Activated CD4-positive, alpha-beta memory T cell treated with anti-CD3 and anti-CD28 coated beads for 36 hours (primary cell): ENCODE measurements at regions of chr17 and their contacts with region 1.

Region 1: GRCh38 chr17:32461853-32462617 is 17.7 kb downstream of the PSMD11 start:
- DNase-seq: peak; percentile 72
- H3K4me3 Mint-ChIP-seq: no peak overlapping the region
- H3K27ac Mint-ChIP-seq: peak overlapping the region; percentile 72
- H3K4me1 Mint-ChIP-seq: peaks cover 32% of the 10 kb centered on the region
- H3K27me3 Mint-ChIP-seq: no peaks in the 10 kb centered on the region

Region 2: GRCh38 chr17:32253117-32253611 is 208.9 kb before region 1 on chr17:
- CTCF ChIA-PET with region 1: interaction called, 7 read pairs
- POLR2A ChIA-PET with region 1: no interaction called
- intact Hi-C with region 1: loop called (anchors 2 kb)
- DNase-seq: peak; percentile 84
- H3K4me3 Mint-ChIP-seq: no peak overlapping the region
- H3K27ac Mint-ChIP-seq: no peak overlapping the region
- H3K4me1 Mint-ChIP-seq: no peaks in the 10 kb centered on the region
- H3K27me3 Mint-ChIP-seq: peaks cover 5% of the 10 kb centered on the region

Region 3: GRCh38 chr17:32479074-32479617 is 17.1 kb after region 1 on chr17:
- CTCF ChIA-PET with region 1: interaction called, 102 read pairs
- POLR2A ChIA-PET with region 1: interaction called, 3 read pairs
- intact Hi-C with region 1: loop called (anchors 2 kb)
- DNase-seq: no peak
- H3K4me3 Mint-ChIP-seq: no peak overlapping the region
- H3K27ac Mint-ChIP-seq: peak overlapping the region; percentile 30
- H3K4me1 Mint-ChIP-seq: peaks cover 7% of the 10 kb centered on the region
- H3K27me3 Mint-ChIP-seq: no peaks in the 10 kb centered on the region

Region 4: DNA sequence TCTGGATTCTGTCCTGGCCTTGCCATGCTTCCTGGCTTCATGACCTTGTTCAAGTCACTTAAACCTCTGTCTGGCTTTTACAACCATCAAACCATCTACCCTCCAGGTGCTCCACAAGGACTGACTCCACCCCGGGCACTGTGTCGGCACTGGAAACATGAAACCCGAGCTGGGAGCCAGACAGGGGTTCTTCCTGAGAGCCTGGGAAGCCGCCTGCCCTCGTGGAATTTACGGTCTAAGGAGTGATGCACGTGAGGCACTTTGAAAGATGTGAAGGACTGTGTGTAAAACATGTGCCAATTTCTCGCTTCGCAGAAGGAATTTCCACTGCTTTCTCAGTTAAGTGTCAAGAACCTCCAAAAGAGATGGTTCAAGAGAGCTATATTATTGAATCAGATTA is 36.4 kb after region 1 on chr17:
- CTCF ChIA-PET with region 1: interaction called, 10 read pairs
- POLR2A ChIA-PET with region 1: no interaction called
- intact Hi-C with region 1: no loop called
- DNase-seq: no peak
- H3K4me3 Mint-ChIP-seq: no peak overlapping the region
- H3K27ac Mint-ChIP-seq: no peak overlapping the region
- H3K4me1 Mint-ChIP-seq: peaks cover 35% of the 10 kb centered on the region
- H3K27me3 Mint-ChIP-seq: no peaks in the 10 kb centered on the region

Region 5: DNA sequence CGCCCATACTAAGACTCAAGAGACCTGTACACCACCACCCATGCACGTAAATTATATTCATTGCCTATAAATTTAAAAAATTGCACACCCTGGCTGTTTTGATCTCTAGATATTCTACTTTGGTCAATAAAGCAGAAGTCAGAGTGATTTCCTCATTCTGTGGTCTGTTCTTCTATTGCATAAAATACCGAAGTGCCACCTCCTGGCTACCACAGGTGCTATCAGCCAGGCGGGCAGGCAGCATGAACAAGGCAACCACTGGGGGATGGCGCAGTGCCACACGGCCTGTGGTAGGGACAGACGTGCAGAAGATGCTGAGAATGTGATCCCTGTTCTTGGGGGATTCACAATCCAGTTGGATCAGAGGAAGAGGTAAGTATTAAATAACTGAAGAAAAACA is 147.1 kb after region 1 on chr17:
- CTCF ChIA-PET with region 1: interaction called, 18 read pairs
- POLR2A ChIA-PET with region 1: no interaction called
- intact Hi-C with region 1: loop called (anchors 1 kb)
- DNase-seq: peak; percentile 83
- H3K4me3 Mint-ChIP-seq: no peak overlapping the region
- H3K27ac Mint-ChIP-seq: no peak overlapping the region
- H3K4me1 Mint-ChIP-seq: peaks cover 7% of the 10 kb centered on the region
- H3K27me3 Mint-ChIP-seq: no peaks in the 10 kb centered on the region

Region 6: DNA sequence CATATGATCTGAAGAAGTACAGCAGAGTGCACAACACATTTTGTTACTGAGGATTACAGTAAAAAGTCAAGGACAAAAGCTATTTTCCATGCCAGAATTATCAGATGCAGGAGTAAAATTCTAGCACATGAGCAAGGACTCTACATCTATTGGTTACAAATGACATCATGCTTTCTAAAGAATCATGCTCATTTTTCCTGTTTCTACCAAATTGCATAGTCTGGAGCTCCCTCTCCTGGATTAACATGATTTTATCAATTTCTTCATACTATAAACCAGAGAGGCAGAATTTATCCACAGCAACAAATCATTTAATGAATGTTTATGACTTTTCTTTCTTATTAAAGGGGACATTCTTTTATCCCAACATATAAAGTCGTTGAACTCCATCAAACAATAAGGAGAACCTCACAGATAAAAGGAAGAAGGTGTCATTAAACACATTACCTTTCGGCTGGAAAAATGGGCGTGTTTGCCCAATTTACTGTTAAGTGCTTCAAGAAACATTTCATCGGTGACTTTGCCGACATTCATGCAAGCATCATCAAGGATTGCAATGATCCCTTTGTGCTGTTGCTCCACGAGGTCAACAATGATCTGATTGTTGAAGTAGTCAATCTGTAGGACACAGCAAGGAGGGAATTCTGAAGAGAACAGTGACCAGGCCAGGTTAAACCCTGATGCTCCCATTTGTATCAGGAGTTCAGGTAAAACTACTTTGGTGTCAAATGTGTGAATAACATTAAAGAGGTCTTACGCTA is 293.2 kb after region 1 on chr17:
- CTCF ChIA-PET with region 1: interaction called, 21 read pairs
- POLR2A ChIA-PET with region 1: interaction called, 3 read pairs
- intact Hi-C with region 1: loop called (anchors 1 kb)
- DNase-seq: no peak
- H3K4me3 Mint-ChIP-seq: no peak overlapping the region
- H3K27ac Mint-ChIP-seq: no peak overlapping the region
- H3K4me1 Mint-ChIP-seq: peaks cover 15% of the 10 kb centered on the region
- H3K27me3 Mint-ChIP-seq: no peaks in the 10 kb centered on the region